HepG2 (cell line): ENCODE measurements at regions of chr11 and their contacts with region 1.

Region 1: GRCh38 chr11:70467201-70468085 is 69.1 kb downstream of the CTTN start:
- DNase-seq: peak; percentile 33
- ATAC-seq: peak; percentile 34; the same call in 2 of the 3 replicates
- H3K4me3 ChIP-seq: no peak overlapping the region
- H3K27ac ChIP-seq: no peak overlapping the region
- H3K4me1 ChIP-seq: no peaks in the 10 kb centered on the region
- H3K27me3 ChIP-seq: 0 out of 5 replicates have a peak, but pooled peaks cover 0 to 9% of the 10 kb centered on the region in 2 experiments
- CTCF ChIP-seq: peak; percentile 82
- EP300 ChIP-seq: no peak
- POLR2A ChIP-seq: no peak
- RAD21 ChIP-seq: peak; percentile 40; the same call in 1 of the 2 replicates

Region 2: GRCh38 chr11:70755410-70756161 is 288.1 kb after region 1 on chr11:
- CTCF ChIA-PET with region 1: interaction called, 6 read pairs
- POLR2A ChIA-PET with region 1: no interaction called
- in situ Hi-C with region 1: loop called (anchors 5 kb)
- intact Hi-C with region 1: loop called (anchors 1 kb)
- DNase-seq: peak; percentile 66
- ATAC-seq: peak; percentile 98
- H3K4me3 ChIP-seq: no peak overlapping the region
- H3K27ac ChIP-seq: no peak overlapping the region
- H3K4me1 ChIP-seq: no peaks in the 10 kb centered on the region
- H3K27me3 ChIP-seq: no peaks in the 10 kb centered on the region
- CTCF ChIP-seq: peak; percentile 98
- EP300 ChIP-seq: no peak
- POLR2A ChIP-seq: no peak
- RAD21 ChIP-seq: peak; percentile 93

Region 3: GRCh38 chr11:71420455-71421241 is 953.2 kb after region 1 on chr11:
- CTCF ChIA-PET with region 1: no interaction called
- POLR2A ChIA-PET with region 1: no interaction called
- in situ Hi-C with region 1: loop called (anchors 25 kb)
- intact Hi-C with region 1: no loop called
- DNase-seq: peak; percentile 48
- ATAC-seq: peak; percentile 81
- H3K4me3 ChIP-seq: no peak overlapping the region
- H3K27ac ChIP-seq: no peak overlapping the region
- H3K4me1 ChIP-seq: peaks cover 9% of the 10 kb centered on the region; the same call in 1 of the 2 replicates
- H3K27me3 ChIP-seq: peaks cover 3 to 28% of the 10 kb centered on the region in 2 experiments; a peak in 3 of 5 replicates
- CTCF ChIP-seq: peak; percentile 88
- EP300 ChIP-seq: no peak
- POLR2A ChIP-seq: no peak
- RAD21 ChIP-seq: peak; percentile 70